K562 (cell line): ENCODE measurements at regions of chr11 and their contacts with region 1.

Region 1: DNA sequence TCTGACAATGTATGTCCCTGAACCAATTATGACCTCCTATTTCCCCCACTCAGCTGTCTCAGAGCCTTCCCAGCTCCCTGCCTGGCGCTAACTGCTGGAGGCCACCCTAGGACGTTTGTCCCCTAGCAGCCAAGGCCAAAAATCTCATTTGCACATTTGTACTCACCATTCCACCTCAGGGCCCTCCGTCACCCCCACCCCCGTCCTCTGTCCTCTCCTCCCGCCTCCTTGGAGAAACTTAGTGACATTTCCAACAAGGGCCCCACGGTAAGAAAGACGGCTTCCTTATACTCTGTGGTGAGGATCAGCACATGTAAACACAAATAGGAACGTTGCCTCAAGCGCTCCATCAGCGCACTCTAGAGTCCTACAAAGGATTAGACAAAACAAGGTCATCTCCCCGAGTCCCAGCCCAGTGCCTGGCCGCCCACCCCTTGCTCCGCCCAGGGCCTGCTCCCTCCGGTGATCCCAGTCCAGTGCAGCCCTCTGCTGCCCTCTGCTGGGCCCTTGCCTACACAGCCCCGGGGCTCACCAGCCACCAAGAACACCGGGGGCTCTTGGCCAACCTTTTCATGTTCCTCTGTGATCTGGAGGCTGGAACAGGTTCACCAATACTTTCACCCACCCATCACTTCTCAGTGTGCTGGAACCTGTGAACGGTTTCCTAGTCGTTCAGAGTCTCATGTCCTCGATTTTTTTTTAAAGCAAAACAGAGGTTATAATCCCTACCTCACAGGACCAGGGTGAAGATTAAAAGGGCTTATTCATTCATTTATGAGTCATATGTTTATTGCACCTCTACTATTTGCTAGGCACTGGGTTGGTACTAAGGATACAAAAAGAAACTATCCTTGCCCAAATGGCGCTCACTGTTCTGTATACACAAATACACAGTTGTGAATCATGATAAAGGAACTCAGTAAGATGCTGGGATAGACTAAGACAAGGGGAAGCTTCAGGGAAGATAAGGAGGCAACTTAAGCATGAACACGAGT is 15.3 kb upstream of the CTR9 start:
- DNase-seq: peak; percentile 95 to 98 (median 96)
- ATAC-seq: peak; percentile 100
- H3K4me3 ChIP-seq: peak overlapping the region; percentile 27; the same call in 1 of the 2 replicates
- H3K27ac ChIP-seq: peak overlapping the region; percentile 76; the same call in 2 of the 3 replicates
- H3K4me1 ChIP-seq: peaks cover 7% of the 10 kb centered on the region in 2 experiments; a peak in 4 of 5 replicates
- H3K27me3 ChIP-seq: no peaks in the 10 kb centered on the region
- CTCF ChIP-seq: peak; percentile 97 to 98 (median 98)
- EP300 ChIP-seq: peak; percentile 28; the same call in 1 of the 2 replicates
- POLR2A ChIP-seq: no peak
- RAD21 ChIP-seq: peak; percentile 99 to 100

Region 2: GRCh38 chr11:10208131-10208575 is 527.6 kb before region 1 on chr11:
- CTCF ChIA-PET with region 1: no interaction called
- POLR2A ChIA-PET with region 1: no interaction called
- in situ Hi-C with region 1: loop called (anchors 25 kb)
- intact Hi-C with region 1: loop called (anchors 5 kb)
- DNase-seq: peak; percentile 35 to 45 (median 40)
- ATAC-seq: peak; percentile 77
- H3K4me3 ChIP-seq: no peak overlapping the region
- H3K27ac ChIP-seq: no peak overlapping the region
- H3K4me1 ChIP-seq: no peaks in the 10 kb centered on the region
- H3K27me3 ChIP-seq: no peaks in the 10 kb centered on the region
- CTCF ChIP-seq: peak; percentile 47 to 73 (median 63); a peak in 5 of 6 replicates
- EP300 ChIP-seq: no peak
- POLR2A ChIP-seq: no peak
- RAD21 ChIP-seq: peak; percentile 58 to 67; a peak in 3 of 4 replicates

Region 3: DNA sequence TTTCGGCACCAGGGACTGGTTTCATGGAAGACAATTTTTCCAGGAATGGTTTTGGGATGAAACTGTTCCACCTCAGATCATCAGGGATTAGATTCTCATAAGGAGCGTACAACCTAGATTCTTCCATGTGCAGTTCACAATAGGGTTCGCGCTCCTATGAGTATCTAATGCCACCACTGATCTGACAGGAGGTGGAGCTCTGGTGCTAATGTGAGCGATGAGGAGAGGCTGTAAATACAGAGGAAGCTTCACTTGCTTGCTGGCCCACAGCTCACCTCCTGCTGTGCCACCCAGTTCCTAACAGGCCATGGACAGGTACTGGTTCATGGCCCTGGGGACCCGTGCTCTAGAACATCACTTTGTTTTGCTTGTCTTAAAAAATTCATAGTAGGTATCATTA is 322.5 kb before region 1 on chr11:
- CTCF ChIA-PET with region 1: interaction called, 17 read pairs
- POLR2A ChIA-PET with region 1: no interaction called
- in situ Hi-C with region 1: loop called (anchors 5 kb)
- intact Hi-C with region 1: loop called (anchors 1 kb)
- DNase-seq: peak in 1 of 4 experiments; percentile 61
- ATAC-seq: peak; percentile 83
- H3K4me3 ChIP-seq: no peak overlapping the region
- H3K27ac ChIP-seq: no peak overlapping the region
- H3K4me1 ChIP-seq: peaks cover 12 to 19% of the 10 kb centered on the region in 2 experiments; a peak in 2 of 5 replicates
- H3K27me3 ChIP-seq: no peaks in the 10 kb centered on the region
- CTCF ChIP-seq: peak; percentile 45 to 66 (median 56); a peak in 5 of 6 replicates
- EP300 ChIP-seq: no peak
- POLR2A ChIP-seq: no peak
- RAD21 ChIP-seq: peak; percentile 80 to 93

Region 4: GRCh38 chr11:10540923-10541560 is 194.7 kb before region 1 on chr11 and contains the start of gene RNF141:
- CTCF ChIA-PET with region 1: interaction called, 5 read pairs
- POLR2A ChIA-PET with region 1: interaction called, 3 read pairs
- in situ Hi-C with region 1: no loop called
- intact Hi-C with region 1: loop called (anchors 1 kb)
- DNase-seq: peak; percentile 95 to 97 (median 96)
- ATAC-seq: peak; percentile 97
- H3K4me3 ChIP-seq: peak within 1 kb of the TSS; percentile 74
- H3K27ac ChIP-seq: peak within 1 kb of the TSS; percentile 86
- H3K4me1 ChIP-seq: peaks cover 8 to 11% of the 10 kb centered on the region in 2 experiments; a peak in 4 of 5 replicates
- H3K27me3 ChIP-seq: no peaks in the 10 kb centered on the region
- CTCF ChIP-seq: peak; percentile 87 to 93 (median 87)
- EP300 ChIP-seq: no peak
- POLR2A ChIP-seq: peak; percentile 96
- RAD21 ChIP-seq: no peak; a peak in 2 of 4 replicates
- polyA plus RNA-seq, gene RNF141: 44.6 to 51.9 TPM

Region 5: DNA sequence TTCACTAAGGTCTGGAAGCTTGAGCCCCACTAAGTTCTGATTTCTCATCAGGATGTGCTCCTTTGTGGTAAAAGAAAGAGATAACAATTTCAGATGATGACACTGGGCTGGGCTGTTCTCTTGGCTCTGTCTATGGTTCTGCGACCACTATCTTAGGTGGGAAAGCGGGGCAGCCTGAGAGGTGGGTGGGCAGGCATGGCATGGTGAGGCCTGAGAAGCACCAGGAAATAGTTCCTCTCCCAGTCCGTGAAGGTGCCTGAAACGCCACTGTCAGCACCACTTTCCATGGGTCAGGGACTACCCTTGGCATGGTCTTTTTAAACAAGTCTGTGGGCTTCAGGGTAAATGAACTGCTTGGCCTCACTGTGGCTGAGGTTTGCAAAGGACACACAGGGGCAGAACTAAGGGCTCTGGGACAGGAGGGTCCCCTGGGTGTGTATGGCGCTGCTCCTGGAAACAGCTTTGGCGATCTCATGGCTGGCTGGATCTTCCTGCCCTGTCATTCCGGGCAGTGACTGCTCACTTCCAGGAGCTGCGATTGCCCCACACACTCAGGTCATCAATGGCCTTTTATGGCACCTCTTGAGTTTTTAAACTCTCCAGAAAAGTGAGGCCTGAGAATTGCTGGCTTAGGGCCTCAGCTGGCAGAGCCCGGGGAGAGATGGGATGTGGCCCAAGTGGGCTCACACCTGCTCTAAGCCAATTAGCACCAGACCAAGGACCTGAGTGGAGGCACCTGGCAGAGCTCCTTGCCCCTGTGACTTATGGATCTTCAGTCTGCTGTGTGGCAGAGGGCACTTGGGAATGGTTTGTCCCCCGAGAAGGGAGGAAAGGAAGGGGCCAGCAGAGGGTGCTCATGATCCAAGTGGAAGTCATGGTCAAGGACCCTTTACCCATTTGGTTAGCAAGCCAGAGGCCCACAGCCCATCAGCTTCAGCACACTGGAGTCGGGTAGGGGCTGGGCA is 111.7 kb before region 1 on chr11:
- CTCF ChIA-PET with region 1: interaction called, 33 read pairs
- POLR2A ChIA-PET with region 1: no interaction called
- in situ Hi-C with region 1: no loop called
- intact Hi-C with region 1: loop called (anchors 1 kb)
- DNase-seq: peak; percentile 60 to 67 (median 62)
- ATAC-seq: peak; percentile 79
- H3K4me3 ChIP-seq: no peak overlapping the region
- H3K27ac ChIP-seq: no peak overlapping the region; the same call in 2 of the 3 replicates
- H3K4me1 ChIP-seq: peaks cover 9 to 13% of the 10 kb centered on the region in 2 experiments; a peak in 4 of 5 replicates
- H3K27me3 ChIP-seq: no peaks in the 10 kb centered on the region
- CTCF ChIP-seq: peak; percentile 72 to 80 (median 77)
- EP300 ChIP-seq: no peak
- POLR2A ChIP-seq: no peak
- RAD21 ChIP-seq: peak; percentile 78 to 89

Region 6: DNA sequence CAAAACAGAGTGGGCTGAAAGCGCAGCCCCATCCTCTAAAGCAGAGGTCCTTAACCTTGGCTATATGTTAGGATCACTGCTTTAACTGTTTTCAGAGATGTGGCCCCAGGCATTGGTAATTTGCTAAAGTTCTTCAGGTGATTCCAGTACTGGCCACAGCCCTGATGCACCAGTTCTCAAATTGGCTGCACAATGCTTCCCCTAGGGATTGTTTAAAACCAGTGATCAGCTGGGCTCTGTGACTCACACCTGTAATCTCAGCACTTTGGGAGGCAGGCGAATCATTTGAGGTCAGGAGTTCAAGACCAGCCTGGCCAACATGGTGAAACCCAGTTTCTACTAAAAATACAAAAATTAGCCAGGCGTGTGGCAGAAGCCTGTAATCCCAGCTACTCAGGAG is 33.8 kb before region 1 on chr11:
- CTCF ChIA-PET with region 1: no interaction called
- POLR2A ChIA-PET with region 1: no interaction called
- in situ Hi-C with region 1: no loop called
- intact Hi-C with region 1: no loop called
- DNase-seq: no peak
- ATAC-seq: no peak
- H3K4me3 ChIP-seq: no peak overlapping the region
- H3K27ac ChIP-seq: no peak overlapping the region
- H3K4me1 ChIP-seq: no peaks in the 10 kb centered on the region
- H3K27me3 ChIP-seq: peaks cover 0 to 7% of the 10 kb centered on the region in 2 experiments; a peak in 1 of 5 replicates
- CTCF ChIP-seq: no peak
- EP300 ChIP-seq: no peak
- POLR2A ChIP-seq: no peak
- RAD21 ChIP-seq: no peak

Region 7: DNA sequence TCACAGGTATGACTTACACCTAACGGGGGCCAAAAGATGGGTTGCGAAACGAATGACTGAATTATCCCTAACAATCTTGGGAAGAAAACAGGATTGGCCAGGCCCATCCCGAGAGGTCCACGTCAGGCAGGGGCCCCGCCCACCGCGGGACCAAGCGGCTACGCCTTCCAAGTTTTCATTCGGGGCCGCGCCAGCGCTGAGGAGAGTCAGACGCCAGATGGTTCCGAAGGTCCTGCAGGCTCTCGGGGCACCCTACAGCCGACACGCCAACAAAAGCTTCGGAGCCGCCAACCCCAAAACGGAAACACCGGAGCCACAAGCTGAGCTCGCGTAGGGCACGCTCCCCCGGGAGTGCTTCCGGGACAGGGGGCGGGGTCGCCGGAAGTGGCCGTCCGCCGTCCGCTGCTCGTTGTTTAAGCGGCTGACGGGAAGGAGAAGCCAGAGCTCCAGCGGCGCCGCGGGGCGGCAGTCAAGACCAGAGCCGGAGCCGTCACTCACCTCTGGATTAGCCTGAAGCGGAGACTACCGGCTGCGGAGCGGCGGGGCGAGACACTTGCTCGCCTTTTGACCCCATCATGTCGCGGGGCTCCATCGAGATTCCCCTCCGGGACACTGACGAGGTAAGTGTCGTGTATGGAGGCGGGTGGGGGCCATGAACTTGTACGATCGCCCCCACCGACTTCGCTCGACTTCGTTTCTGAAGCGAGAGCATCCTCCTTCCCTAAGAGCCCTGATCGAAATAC is 15.2 kb after region 1 on chr11 and contains the start of gene CTR9:
- CTCF ChIA-PET with region 1: no interaction called
- POLR2A ChIA-PET with region 1: interaction called, 10 read pairs
- in situ Hi-C with region 1: no loop called
- intact Hi-C with region 1: no loop called
- DNase-seq: peak; percentile 78 to 96 (median 84)
- ATAC-seq: peak; percentile 95
- H3K4me3 ChIP-seq: peak within 1 kb of the TSS; percentile 63
- H3K27ac ChIP-seq: peak within 1 kb of the TSS; percentile 89
- H3K4me1 ChIP-seq: peaks cover 13 to 19% of the 10 kb centered on the region in 2 experiments
- H3K27me3 ChIP-seq: no peaks in the 10 kb centered on the region
- CTCF ChIP-seq: peak; percentile 37 to 66 (median 60); a peak in 5 of 6 replicates
- EP300 ChIP-seq: peak; percentile 26; the same call in 1 of the 2 replicates
- POLR2A ChIP-seq: peak; percentile 93
- RAD21 ChIP-seq: peak; percentile 14 to 53
- polyA plus RNA-seq, gene CTR9: 25.4 to 38.3 TPM

Region 8: GRCh38 chr11:10778217-10778970 is 42.6 kb after region 1 on chr11:
- CTCF ChIA-PET with region 1: no interaction called
- POLR2A ChIA-PET with region 1: no interaction called
- in situ Hi-C with region 1: no loop called
- intact Hi-C with region 1: no loop called
- DNase-seq: no peak
- ATAC-seq: no peak
- H3K4me3 ChIP-seq: no peak overlapping the region
- H3K27ac ChIP-seq: no peak overlapping the region
- H3K4me1 ChIP-seq: no peaks in the 10 kb centered on the region
- H3K27me3 ChIP-seq: no peaks in the 10 kb centered on the region
- CTCF ChIP-seq: no peak
- EP300 ChIP-seq: no peak
- POLR2A ChIP-seq: no peak
- RAD21 ChIP-seq: no peak

Region 9: GRCh38 chr11:10982704-10983510 is 247.1 kb after region 1 on chr11:
- CTCF ChIA-PET with region 1: no interaction called
- POLR2A ChIA-PET with region 1: no interaction called
- in situ Hi-C with region 1: no loop called
- intact Hi-C with region 1: no loop called
- DNase-seq: peak in 3 of 4 experiments; percentile 10 to 28 (median 13)
- ATAC-seq: peak; percentile 62; the same call in 2 of the 3 replicates
- H3K4me3 ChIP-seq: no peak overlapping the region
- H3K27ac ChIP-seq: no peak overlapping the region
- H3K4me1 ChIP-seq: peaks cover 6 to 13% of the 10 kb centered on the region in 2 experiments
- H3K27me3 ChIP-seq: peaks cover 3 to 6% of the 10 kb centered on the region in 2 experiments; a peak in 1 of 5 replicates
- CTCF ChIP-seq: no peak
- EP300 ChIP-seq: no peak
- POLR2A ChIP-seq: no peak
- RAD21 ChIP-seq: no peak